Activated T-helper 2 cell treated with anti-CD3 and anti-CD28 coated beads, Interferon-gamma antibody, Interleukin-2, Interleukin-4, amounts not matched to agents 10 μg/mL and 5 μg/mL and 100 μg/mL, durations not matched to agents 14 hours and 24 hours and 36 hours (primary cell): ENCODE measurements at regions of chr19 and their contacts with region 1.

Region 1: GRCh38 chr19:54463531-54464043 is at the start of gene LENG9:
- DNase-seq: peak; percentile 95
- H3K4me3 Mint-ChIP-seq: peak within 1 kb of the TSS; percentile 83
- H3K27ac Mint-ChIP-seq: peak within 1 kb of the TSS; percentile 92
- H3K4me1 Mint-ChIP-seq: peaks cover 12% of the 10 kb centered on the region
- H3K27me3 Mint-ChIP-seq: peaks cover 11% of the 10 kb centered on the region
- total RNA-seq, gene LENG9: 7.5 and 8.1 TPM in 2 replicates

Region 2: GRCh38 chr19:54102421-54103169 is 361.0 kb before region 1 on chr19 and contains the start of gene NDUFA3:
- intact Hi-C with region 1: loop called (anchors 5 kb)
- DNase-seq: peak; percentile 98
- H3K4me3 Mint-ChIP-seq: peak within 1 kb of the TSS; percentile 91
- H3K27ac Mint-ChIP-seq: peak within 1 kb of the TSS; percentile 79
- H3K4me1 Mint-ChIP-seq: peaks cover 8% of the 10 kb centered on the region
- H3K27me3 Mint-ChIP-seq: peaks cover 3% of the 10 kb centered on the region
- total RNA-seq, gene NDUFA3: 105 and 115 TPM in 2 replicates

Region 3: DNA sequence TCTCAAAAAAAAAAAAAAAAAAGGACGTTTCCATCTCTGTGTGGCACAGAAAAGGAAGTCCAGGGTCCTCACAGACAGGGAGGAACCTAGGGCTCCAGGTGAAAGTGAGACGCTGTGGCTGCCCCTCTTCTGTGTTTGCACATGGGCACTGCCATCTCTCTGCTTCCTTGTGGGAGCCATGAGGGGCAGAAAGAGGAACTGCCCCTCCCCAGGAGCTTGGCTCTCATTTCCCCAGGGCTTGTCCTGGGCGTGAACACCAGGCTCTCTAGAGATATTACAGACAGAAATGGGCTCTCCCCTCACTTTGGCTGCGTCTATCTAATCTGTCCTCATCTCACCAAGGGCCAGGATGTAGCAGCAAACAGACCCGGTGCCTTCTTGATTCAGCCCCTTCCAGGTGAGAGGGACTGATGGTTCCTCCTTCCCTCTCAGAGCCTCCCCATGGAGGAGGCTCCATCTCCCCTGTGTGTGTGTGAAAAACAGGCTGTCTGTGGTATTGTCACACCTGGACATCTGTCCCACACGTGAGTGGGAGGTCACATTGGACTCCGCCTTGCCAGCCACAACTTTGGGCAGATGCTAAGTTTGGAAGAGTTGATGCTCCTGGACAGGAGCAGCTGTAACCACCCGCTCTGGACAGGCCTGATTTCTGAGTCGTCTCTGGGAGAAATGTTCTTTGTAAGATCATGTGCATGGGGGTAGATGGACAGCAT is 123.8 kb before region 1 on chr19:
- intact Hi-C with region 1: no loop called
- DNase-seq: no peak
- H3K4me3 Mint-ChIP-seq: no peak overlapping the region
- H3K27ac Mint-ChIP-seq: no peak overlapping the region
- H3K4me1 Mint-ChIP-seq: no peaks in the 10 kb centered on the region
- H3K27me3 Mint-ChIP-seq: peaks cover 9% of the 10 kb centered on the region

Region 4: DNA sequence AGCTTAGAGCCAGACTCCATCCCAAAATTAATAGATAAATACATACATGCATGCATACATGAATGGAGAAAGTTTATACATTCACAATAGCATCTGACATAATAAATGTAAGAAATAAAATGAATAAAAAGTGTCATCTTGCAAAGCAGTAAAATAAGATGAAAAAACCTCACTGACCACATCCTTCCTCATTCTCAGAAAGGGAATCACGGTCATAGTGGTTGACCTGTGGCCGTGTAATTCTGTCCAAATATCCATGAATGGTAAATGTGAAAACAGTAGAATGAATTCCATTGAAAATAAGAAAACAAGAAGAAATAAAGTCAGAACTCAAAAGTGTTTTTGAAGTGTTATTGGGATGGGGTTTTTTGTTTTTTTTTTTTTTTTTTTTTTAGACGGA is 19.3 kb after region 1 on chr19:
- intact Hi-C with region 1: no loop called
- DNase-seq: no peak
- H3K4me3 Mint-ChIP-seq: no peak overlapping the region
- H3K27ac Mint-ChIP-seq: no peak overlapping the region
- H3K4me1 Mint-ChIP-seq: peaks cover 26% of the 10 kb centered on the region
- H3K27me3 Mint-ChIP-seq: peaks cover 23% of the 10 kb centered on the region

Region 5: DNA sequence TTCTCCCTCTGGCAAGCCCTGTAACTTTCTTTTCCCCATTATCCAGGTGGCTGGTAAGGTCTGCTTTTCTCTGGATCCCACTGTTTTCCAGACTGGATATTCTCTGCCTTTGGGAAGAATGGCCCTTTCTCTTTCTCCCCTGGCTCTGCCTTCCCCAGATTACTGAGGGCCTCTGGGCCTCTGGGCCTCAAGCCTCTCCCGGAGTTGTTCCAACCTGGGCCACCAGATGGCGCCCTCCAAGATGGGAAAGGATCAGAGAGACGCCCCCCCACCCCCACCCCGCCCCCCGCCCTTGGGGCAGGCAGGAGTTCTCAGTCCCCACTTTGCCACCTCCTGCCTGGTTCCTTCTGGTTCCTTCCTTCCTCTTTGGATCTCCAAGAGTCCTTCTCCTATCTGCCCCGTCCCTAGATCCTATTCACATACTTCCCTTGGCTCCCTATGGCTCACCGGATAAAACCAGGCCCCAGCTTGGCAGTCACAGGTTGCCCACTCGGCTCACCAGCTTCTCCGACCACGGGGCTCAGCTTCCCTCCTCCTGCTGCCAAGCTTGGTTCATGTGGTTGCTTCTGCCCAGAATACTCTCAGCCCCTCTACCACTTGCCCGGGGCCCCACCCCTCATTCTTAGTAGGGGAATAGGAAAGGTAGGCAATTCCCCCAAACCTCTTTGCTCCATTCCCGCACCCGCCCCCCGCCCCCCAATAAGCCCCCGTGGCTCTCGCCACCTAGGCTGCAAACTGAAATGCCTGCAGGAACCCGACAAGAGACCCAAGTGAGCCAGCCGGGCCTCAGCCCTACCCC is 625.2 kb after region 1 on chr19:
- intact Hi-C with region 1: loop called (anchors 10 kb)
- DNase-seq: peak; percentile 61
- H3K4me3 Mint-ChIP-seq: no peak overlapping the region
- H3K27ac Mint-ChIP-seq: no peak overlapping the region
- H3K4me1 Mint-ChIP-seq: peaks cover 11% of the 10 kb centered on the region
- H3K27me3 Mint-ChIP-seq: peaks cover 33% of the 10 kb centered on the region

Region 6: DNA sequence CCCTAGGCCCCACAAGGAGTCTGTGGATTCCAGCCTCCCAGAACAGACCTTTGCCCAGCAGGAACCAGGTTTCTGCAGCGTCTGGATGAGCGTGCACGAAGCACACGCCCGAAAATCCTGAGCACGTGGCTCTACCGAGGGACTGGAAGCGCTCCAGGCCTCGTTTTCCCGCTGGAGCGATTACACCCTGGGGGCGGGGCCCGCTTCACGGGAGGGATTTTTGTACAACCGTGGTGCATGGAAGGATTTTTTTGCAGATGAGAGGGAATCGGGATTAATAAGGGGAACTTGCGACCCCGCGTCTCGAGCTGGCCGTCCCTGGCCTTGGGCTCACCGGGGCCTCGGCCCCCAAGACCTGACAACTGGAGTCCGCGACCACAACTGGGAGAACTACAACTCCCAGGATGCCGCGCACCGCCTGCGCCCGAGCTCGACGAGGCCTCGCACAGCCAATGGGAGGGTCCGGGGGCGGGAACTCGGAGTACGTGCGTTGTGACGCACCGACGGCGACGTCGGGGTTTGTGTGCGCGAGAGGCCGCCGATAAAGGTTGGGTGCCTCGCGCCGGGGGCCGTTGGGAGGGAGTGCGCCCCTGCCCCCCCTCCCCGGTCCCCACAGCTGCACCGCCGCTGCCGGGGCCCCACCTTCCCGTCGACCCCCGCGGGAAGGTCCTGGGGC is 1012.7 kb after region 1 on chr19 and contains the start of gene ZNF628:
- intact Hi-C with region 1: loop called (anchors 5 kb)
- DNase-seq: peak; percentile 96
- H3K4me3 Mint-ChIP-seq: peak within 1 kb of the TSS; percentile 88
- H3K27ac Mint-ChIP-seq: peak within 1 kb of the TSS; percentile 90
- H3K4me1 Mint-ChIP-seq: peaks cover 20% of the 10 kb centered on the region
- H3K27me3 Mint-ChIP-seq: no peaks in the 10 kb centered on the region
- total RNA-seq, gene ZNF628: 8.6 and 9.5 TPM in 2 replicates